ENCODE measurements at regions of chr19 and their contacts with region 1.

Region 1: GRCh38 chr19:7394731-7395359 is 46.1 kb downstream of the ARHGEF18 start:
- DNase-seq: peak; percentile 89
- H3K4me3 ChIP-seq: peak overlapping the region; percentile 91 to 94 (median 93)
- H3K27ac ChIP-seq: peak overlapping the region; percentile 53
- H3K4me1 ChIP-seq: peaks cover 5% of the 10 kb centered on the region
- H3K27me3 ChIP-seq: no peaks in the 10 kb centered on the region
- CTCF ChIP-seq: peak in 1 of 2 donors; percentile 10

Region 2: DNA sequence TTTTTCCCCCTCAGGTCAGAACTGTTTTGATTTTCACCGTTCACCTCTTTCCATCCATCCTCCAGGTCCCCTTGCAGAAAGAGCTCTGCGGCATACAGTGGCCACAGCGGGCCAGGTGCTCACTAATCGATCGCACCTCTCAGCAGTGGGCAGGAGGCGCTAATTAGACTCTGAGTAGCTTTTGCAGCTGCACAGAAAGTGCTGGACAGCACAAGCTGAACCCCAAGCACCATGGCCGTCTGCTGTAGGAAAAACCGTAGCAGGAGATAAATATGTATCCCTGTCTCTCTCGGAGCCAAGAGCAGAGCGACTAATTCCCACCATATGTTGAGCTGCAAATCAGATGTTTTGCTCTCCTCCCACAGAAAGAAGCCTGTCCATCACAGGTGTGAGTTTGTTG is 39.5 kb after region 1 on chr19:
- CTCF ChIA-PET with region 1: no interaction called
- dilution Hi-C with region 1: loop called (anchors 5 kb)
- in situ Hi-C with region 1: no loop called
- intact Hi-C with region 1: no loop called
- DNase-seq: no peak
- H3K4me3 ChIP-seq: no peak overlapping the region
- H3K27ac ChIP-seq: no peak overlapping the region
- H3K4me1 ChIP-seq: no peaks in the 10 kb centered on the region
- H3K27me3 ChIP-seq: no peaks in the 10 kb centered on the region
- CTCF ChIP-seq: no peak

Region 3: GRCh38 chr19:7482584-7483439 is 88.0 kb after region 1 on chr19:
- CTCF ChIA-PET with region 1: no interaction called
- dilution Hi-C with region 1: no loop called
- in situ Hi-C with region 1: no loop called
- intact Hi-C with region 1: no loop called
- DNase-seq: peak; percentile 28
- H3K4me3 ChIP-seq: peak overlapping the region in 1 of 3 experiments; percentile 9
- H3K27ac ChIP-seq: no peak overlapping the region
- H3K4me1 ChIP-seq: peaks cover 30% of the 10 kb centered on the region
- H3K27me3 ChIP-seq: no peaks in the 10 kb centered on the region
- CTCF ChIP-seq: no peak

Region 4: GRCh38 chr19:7522072-7522922 is 127.5 kb after region 1 on chr19 and contains the start of gene MCOLN1:
- CTCF ChIA-PET with region 1: no interaction called
- dilution Hi-C with region 1: no loop called
- in situ Hi-C with region 1: loop called (anchors 10 to 25 kb)
- intact Hi-C with region 1: loop called (anchors 5 kb)
- DNase-seq: peak; percentile 92
- H3K4me3 ChIP-seq: peak within 1 kb of the TSS; percentile 61 to 78 (median 76)
- H3K27ac ChIP-seq: peak within 1 kb of the TSS; percentile 18
- H3K4me1 ChIP-seq: peaks cover 14% of the 10 kb centered on the region
- H3K27me3 ChIP-seq: no peaks in the 10 kb centered on the region
- CTCF ChIP-seq: no peak
- total RNA-seq, gene MCOLN1: 10.2 to 15.7 TPM

Region 5: DNA sequence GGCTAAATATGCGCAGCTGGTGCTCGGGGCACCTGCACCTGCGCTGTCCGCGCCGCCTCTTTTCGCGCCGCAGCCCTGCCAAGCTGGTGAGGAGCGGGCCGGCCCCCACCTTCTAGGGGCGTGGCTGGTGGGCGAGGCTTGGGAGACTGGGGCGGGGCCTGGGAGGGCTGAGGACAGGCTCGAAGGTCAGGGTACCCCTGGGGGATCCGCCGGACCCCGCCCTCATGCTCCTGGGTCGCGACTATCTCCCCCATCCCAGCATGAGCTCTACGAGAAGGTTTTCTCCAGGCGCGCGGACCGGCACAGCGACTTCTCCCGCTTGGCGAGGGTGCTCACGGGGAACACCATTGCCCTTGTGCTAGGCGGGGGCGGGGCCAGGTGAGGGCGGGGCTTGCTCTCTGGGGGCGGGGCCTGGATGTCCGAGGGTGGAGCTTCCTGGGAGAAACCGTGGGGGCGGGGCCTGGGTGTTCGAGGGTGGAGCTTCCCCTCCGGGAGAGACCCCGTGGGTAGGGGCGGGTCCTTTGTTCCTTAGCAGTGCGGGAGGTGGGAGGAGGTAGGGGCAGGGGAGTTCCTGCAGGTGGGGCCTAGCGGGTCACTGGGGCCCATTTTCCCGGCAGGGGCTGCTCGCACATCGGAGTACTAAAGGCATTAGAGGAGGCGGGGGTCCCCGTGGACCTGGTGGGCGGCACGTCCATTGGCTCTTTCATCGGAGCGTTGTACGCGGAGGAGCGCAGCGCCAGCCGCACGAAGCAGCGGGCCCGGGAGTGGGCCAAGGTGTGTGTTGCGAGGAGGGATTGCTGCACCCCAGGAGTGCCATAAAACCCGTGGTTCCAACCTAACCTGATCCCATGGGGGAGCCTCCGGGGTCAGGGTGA is 160.4 kb after region 1 on chr19:
- CTCF ChIA-PET with region 1: no interaction called
- dilution Hi-C with region 1: no loop called
- in situ Hi-C with region 1: no loop called
- intact Hi-C with region 1: no loop called
- DNase-seq: no peak
- H3K4me3 ChIP-seq: no peak overlapping the region
- H3K27ac ChIP-seq: no peak overlapping the region
- H3K4me1 ChIP-seq: no peaks in the 10 kb centered on the region
- H3K27me3 ChIP-seq: no peaks in the 10 kb centered on the region
- CTCF ChIP-seq: no peak